ENCODE measurements at regions of chr20 and their contacts with region 1.

Region 1: DNA sequence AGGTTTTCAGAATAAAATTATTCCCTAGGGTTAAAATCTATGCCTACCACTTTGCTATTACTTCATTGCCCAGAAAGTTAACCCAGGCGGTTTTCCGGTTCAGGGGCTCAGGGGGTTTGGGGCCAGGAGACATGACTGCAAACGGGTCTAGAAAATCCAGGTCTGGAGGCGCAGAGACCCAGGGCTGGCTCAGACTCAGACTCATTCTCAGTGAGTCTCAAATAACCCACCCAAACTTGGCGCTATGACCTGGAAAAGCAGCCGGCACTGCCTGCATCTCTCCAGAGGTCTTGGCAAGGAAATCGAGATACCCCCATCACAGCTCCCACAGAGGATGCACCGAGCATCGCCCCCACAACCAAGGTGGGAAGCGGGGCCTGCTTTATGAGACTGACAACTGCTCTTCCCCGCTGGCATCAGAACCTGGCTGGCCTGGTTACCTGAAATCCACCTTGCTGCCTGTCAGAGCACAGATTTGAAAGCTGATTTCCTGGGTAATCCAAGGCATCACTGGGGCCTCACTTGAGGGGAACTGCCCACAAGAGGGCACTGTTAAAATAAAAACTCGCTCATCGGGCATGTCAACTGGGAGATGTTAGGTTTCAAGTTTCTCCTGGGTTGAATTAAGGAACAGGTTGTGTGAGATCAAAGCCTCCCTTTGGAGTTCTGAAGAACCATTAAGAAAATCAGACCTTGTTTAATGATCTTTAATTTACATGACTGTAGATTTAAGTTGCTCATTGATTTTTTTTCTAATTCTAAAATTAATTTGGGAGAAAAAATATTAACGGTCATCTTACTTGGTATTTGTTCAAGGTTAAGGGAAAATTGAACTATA is 55.1 kb downstream of the KIF16B start:
- DNase-seq: no peak
- ATAC-seq: peak; percentile 75

Region 2: GRCh38 chr20:16639027-16639941 is 121.1 kb after region 1 on chr20:
- intact Hi-C with region 1: loop called (anchors 5 kb)
- DNase-seq: no peak
- ATAC-seq: no peak

Region 3: DNA sequence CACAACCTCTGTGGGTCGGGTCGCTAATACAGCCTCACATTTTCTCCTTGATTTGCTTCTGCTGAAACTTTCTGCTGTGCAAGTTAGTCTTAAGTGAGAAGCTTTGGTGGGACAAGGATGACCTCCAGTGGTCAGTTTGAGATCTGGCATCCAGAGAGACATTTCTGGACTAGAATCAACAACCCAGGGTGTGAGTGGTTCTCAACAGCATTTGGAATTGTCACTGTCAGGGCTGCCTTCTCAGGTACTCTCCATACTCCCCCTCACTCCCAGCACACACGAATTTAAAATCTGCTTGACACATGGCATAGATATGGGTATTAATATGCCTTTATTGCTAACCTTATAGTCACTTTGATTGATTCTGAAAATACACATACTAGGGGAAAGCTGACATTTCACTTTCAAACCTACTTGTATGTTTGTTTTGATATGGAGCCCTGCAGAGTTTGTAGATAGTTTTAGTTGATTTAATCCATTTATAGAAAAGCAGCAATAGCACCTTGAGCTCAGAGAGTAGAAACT is 243.2 kb after region 1 on chr20:
- intact Hi-C with region 1: loop called (anchors 10 kb)
- DNase-seq: no peak
- ATAC-seq: peak; percentile 84

Measured in Right ventricle myocardium superior (tissue), 1 donor.